ENCODE measurements at regions of chr9 and their contacts with region 1.

Region 1: GRCh38 chr9:110058304-110058953 is 149.5 kb downstream of the C9orf152 start:
- DNase-seq: peak; percentile 30 to 75 (median 50)
- ATAC-seq: peak; percentile 44
- H3K4me3 ChIP-seq: no peak overlapping the region
- H3K4me3 Mint-ChIP-seq: no peak overlapping the region
- H3K27ac ChIP-seq: no peak overlapping the region
- H3K27ac Mint-ChIP-seq: no peak overlapping the region
- H3K4me1 ChIP-seq: no peaks in the 10 kb centered on the region
- H3K4me1 Mint-ChIP-seq: peaks cover 7% of the 10 kb centered on the region
- H3K27me3 ChIP-seq: no peaks in the 10 kb centered on the region
- H3K27me3 Mint-ChIP-seq: no peaks in the 10 kb centered on the region
- CTCF ChIP-seq: peak; percentile 67

Region 2: GRCh38 chr9:109574068-109574882 is 484.2 kb before region 1 on chr9:
- CTCF ChIA-PET with region 1: no interaction called
- POLR2A ChIA-PET with region 1: no interaction called
- intact Hi-C with region 1: loop called (anchors 5 to 10 kb)
- DNase-seq: peak in 4 of 14 experiments; percentile 5 to 20 (median 16)
- ATAC-seq: no peak
- H3K4me3 ChIP-seq: no peak overlapping the region
- H3K4me3 Mint-ChIP-seq: no peak overlapping the region
- H3K27ac ChIP-seq: no peak overlapping the region
- H3K27ac Mint-ChIP-seq: no peak overlapping the region
- H3K4me1 ChIP-seq: no peaks in the 10 kb centered on the region
- H3K4me1 Mint-ChIP-seq: no peaks in the 10 kb centered on the region
- H3K27me3 ChIP-seq: no peaks in the 10 kb centered on the region
- H3K27me3 Mint-ChIP-seq: peaks cover 7% of the 10 kb centered on the region
- CTCF ChIP-seq: peak; percentile 44

Region 3: GRCh38 chr9:109579191-109579948 is 479.1 kb before region 1 on chr9:
- CTCF ChIA-PET with region 1: no interaction called
- POLR2A ChIA-PET with region 1: no interaction called
- intact Hi-C with region 1: loop called (anchors 5 to 10 kb)
- DNase-seq: no peak
- ATAC-seq: no peak
- H3K4me3 ChIP-seq: no peak overlapping the region
- H3K4me3 Mint-ChIP-seq: no peak overlapping the region
- H3K27ac ChIP-seq: no peak overlapping the region
- H3K27ac Mint-ChIP-seq: no peak overlapping the region
- H3K4me1 ChIP-seq: no peaks in the 10 kb centered on the region
- H3K4me1 Mint-ChIP-seq: no peaks in the 10 kb centered on the region
- H3K27me3 ChIP-seq: no peaks in the 10 kb centered on the region
- H3K27me3 Mint-ChIP-seq: peaks cover 4% of the 10 kb centered on the region
- CTCF ChIP-seq: no peak

Region 4: GRCh38 chr9:109903515-109904138 is 154.8 kb before region 1 on chr9:
- CTCF ChIA-PET with region 1: interaction called, 4 read pairs
- POLR2A ChIA-PET with region 1: no interaction called
- intact Hi-C with region 1: loop called (anchors 1 kb)
- DNase-seq: peak; percentile 27 to 82 (median 48)
- ATAC-seq: peak; percentile 67
- H3K4me3 ChIP-seq: no peak overlapping the region
- H3K4me3 Mint-ChIP-seq: no peak overlapping the region
- H3K27ac ChIP-seq: no peak overlapping the region
- H3K27ac Mint-ChIP-seq: no peak overlapping the region
- H3K4me1 ChIP-seq: no peaks in the 10 kb centered on the region
- H3K4me1 Mint-ChIP-seq: no peaks in the 10 kb centered on the region
- H3K27me3 ChIP-seq: no peaks in the 10 kb centered on the region
- H3K27me3 Mint-ChIP-seq: peaks cover 4% of the 10 kb centered on the region
- CTCF ChIP-seq: peak; percentile 85

Region 5: DNA sequence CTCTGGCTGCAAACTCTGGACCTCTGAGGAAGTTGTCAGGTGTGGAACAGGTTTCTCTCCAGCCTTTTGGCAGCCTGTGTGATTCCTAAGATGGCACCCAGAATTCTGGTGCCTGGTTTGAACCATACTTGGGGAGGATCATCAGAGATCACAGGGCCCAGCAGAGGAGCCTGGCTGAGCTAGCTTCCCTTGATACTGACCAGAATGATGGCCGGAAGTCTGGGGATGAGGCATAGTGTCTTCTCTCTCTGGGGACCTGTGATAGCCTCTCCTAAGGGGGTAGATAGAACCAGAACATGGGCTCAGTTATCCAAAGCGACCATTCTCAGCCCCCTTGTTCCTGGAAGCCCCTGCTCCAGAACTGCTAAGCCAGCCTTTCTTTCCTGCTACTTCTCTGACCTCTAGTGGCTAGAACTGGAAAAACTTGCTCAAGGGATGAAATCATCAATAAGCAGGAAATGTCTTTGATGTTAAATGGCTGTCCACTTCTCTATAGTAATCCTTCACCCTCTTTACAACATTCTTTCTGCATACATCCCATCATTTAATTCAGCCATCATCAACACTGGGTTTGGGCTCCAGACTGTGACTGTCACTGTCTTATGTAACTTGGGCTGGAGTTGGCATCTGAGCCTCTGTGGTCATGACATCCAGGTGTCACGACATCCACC is 94.4 kb after region 1 on chr9:
- CTCF ChIA-PET with region 1: no interaction called
- POLR2A ChIA-PET with region 1: interaction called, 3 read pairs
- intact Hi-C with region 1: loop called in 1 of 2 experiments (anchors 5 kb)
- DNase-seq: peak in 3 of 14 experiments; percentile 58 to 66 (median 63)
- ATAC-seq: no peak
- H3K4me3 ChIP-seq: no peak overlapping the region
- H3K4me3 Mint-ChIP-seq: no peak overlapping the region
- H3K27ac ChIP-seq: no peak overlapping the region
- H3K27ac Mint-ChIP-seq: no peak overlapping the region
- H3K4me1 ChIP-seq: peaks cover 43% of the 10 kb centered on the region
- H3K4me1 Mint-ChIP-seq: peaks cover 80% of the 10 kb centered on the region
- H3K27me3 ChIP-seq: no peaks in the 10 kb centered on the region
- H3K27me3 Mint-ChIP-seq: no peaks in the 10 kb centered on the region
- CTCF ChIP-seq: peak; percentile 71

Measured in CD4-positive, alpha-beta T cell (primary cell).